Activated CD4-positive, alpha-beta T cell treated with anti-CD3 and anti-CD28 coated beads for 36 hours (primary cell): ENCODE measurements at regions of chr2 and their contacts with region 1.

Region 1: GRCh38 chr2:232611551-232612218 is 21.7 kb upstream of the EFHD1 start:
- DNase-seq: peak; percentile 84
- ATAC-seq: peak; percentile 80
- H3K4me3 Mint-ChIP-seq: no peak overlapping the region
- H3K27ac Mint-ChIP-seq: no peak overlapping the region
- H3K4me1 Mint-ChIP-seq: no peaks in the 10 kb centered on the region
- H3K27me3 Mint-ChIP-seq: no peaks in the 10 kb centered on the region

Region 2: DNA sequence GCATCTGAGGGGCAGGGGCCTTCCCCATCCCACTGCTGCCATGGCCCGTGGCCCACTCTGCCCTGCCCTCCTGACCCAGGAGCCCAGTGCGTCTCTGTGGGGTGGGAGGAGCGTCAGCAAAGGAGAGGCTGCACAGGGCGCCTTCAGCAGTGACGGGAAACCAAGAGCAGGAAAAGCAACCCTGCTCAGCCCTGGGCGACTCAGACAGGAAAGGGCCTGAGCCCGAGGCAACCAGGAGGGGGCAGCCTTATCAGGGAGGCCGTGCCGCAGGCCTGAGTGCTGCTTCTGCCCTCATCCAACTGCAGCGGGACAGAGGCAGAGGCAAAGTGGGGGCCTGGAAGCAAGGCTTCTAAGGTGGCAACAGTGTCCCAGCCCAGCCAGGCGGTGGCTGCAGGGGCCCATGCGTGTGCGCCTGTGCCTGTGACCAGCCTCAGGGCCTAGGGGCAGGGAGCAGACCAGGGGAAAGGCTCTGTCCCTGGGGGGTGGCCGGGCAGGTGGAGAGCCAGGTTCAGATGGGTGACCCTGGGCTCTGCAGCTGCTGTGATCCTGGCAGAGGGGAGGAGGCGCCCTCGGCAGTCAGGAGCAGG is 179.0 kb before region 1 on chr2:
- CTCF ChIA-PET with region 1: no interaction called
- POLR2A ChIA-PET with region 1: no interaction called
- intact Hi-C with region 1: no loop called
- DNase-seq: peak; percentile 26
- ATAC-seq: peak; percentile 77
- H3K4me3 Mint-ChIP-seq: no peak overlapping the region
- H3K27ac Mint-ChIP-seq: no peak overlapping the region
- H3K4me1 Mint-ChIP-seq: no peaks in the 10 kb centered on the region
- H3K27me3 Mint-ChIP-seq: no peaks in the 10 kb centered on the region

Region 3: DNA sequence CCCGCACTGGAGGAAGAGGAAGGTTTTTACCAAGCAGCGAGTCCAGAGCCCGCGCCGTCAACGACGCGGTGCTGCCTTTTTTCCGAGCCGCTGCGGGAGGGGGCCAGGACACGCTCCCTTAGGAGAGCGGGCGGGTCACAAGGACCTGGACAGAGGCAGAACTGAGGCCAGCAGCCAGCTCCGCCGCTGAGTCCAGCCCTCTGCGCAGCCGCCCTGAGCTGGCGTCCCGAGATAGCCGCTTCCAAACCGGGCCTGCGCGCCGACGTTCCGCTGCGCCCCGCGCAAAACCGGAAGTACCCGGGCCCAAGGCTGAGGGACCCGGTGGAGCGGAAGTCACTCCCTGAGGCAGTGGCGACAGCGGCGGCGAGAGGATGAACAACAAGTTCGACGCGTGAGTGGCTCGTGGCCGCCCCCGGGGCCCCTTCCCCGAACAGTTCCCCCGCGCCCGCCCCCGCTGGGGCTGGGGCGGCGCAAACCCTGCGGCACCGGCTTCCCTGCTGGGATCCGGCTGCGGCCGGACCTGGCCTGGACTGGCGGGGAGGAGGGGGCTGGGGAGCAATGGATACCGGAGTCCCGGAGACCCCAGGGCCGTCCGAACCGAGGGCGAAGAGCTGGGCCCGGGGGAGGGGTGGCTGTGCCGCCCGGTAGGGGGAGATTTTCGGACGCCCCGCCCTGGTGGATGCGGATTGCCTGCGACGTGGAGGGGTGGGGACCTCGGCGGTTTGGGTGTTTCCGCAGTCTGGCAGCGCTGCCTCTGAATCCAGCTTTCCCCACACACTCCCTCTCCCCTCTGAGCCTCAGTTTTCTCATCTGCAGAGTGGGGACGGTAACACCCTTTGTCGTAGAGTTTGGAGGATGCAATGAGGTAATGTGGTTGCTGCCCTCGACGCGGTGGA is 61.1 kb before region 1 on chr2 and contains the starts of genes EIF4E2 and TIGD1:
- CTCF ChIA-PET with region 1: no interaction called
- POLR2A ChIA-PET with region 1: no interaction called
- intact Hi-C with region 1: loop called in 1 of 2 experiments (anchors 1 kb)
- DNase-seq: peak; percentile 96
- ATAC-seq: peak; percentile 95
- H3K4me3 Mint-ChIP-seq: peak within 1 kb of the TSS; percentile 98
- H3K27ac Mint-ChIP-seq: peak within 1 kb of the TSS; percentile 100
- H3K4me1 Mint-ChIP-seq: peaks cover 66% of the 10 kb centered on the region
- H3K27me3 Mint-ChIP-seq: no peaks in the 10 kb centered on the region
- total RNA-seq, gene EIF4E2: 57.0 to 68.0 TPM
- total RNA-seq, gene TIGD1: 7.6 to 7.9 TPM

Region 4: DNA sequence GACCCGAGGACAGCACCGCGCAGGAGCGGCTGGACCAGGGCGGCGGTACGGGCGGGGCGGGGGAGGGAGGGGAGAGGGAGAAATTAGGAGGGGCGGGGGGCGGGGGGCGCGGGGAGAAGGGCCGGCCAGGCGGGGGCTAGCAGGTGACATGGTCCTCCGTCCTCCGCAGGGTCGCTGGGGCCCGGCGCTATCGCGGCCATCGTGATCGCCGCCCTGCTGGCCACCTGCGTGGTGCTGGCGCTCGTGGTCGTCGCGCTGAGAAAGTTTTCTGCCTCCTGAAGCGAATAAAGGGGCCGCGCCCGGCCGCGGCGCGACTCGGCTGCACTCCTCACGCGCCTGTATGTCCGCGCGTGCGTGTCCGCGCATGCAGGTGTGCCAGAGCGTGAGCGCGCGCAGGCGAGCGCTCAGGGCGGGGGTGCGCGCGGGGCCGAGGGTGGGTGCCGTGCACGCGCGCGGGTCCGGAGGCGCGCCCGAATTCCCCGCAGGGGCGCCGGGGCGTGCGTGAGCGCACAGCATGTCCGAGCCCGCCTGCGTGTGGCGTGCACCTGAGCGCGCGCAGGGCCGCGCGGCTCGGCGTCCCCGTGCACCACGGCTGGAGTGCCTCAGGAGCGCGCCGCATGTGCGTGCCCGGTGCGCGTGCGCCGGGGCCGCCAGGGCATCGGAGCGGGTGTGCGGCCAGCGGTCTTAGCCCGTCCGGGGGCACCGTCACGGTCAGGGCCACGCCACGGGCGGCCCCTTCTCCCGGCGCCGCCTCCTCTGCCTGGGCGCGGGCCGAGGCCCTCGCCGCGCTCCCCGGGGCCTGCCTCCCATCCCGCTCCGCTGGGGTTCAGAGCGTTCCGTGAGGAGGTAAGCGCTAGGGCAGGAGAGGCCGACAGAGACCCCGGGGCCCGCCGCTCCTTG is 264.6 kb after region 1 on chr2:
- CTCF ChIA-PET with region 1: no interaction called
- POLR2A ChIA-PET with region 1: no interaction called
- intact Hi-C with region 1: loop called in 1 of 2 experiments (anchors 5 kb)
- DNase-seq: peak; percentile 67
- ATAC-seq: peak; percentile 69
- H3K4me3 Mint-ChIP-seq: peak overlapping the region; percentile 50
- H3K27ac Mint-ChIP-seq: no peak overlapping the region
- H3K4me1 Mint-ChIP-seq: peaks cover 5% of the 10 kb centered on the region
- H3K27me3 Mint-ChIP-seq: peaks cover 7% of the 10 kb centered on the region

Region 5: DNA sequence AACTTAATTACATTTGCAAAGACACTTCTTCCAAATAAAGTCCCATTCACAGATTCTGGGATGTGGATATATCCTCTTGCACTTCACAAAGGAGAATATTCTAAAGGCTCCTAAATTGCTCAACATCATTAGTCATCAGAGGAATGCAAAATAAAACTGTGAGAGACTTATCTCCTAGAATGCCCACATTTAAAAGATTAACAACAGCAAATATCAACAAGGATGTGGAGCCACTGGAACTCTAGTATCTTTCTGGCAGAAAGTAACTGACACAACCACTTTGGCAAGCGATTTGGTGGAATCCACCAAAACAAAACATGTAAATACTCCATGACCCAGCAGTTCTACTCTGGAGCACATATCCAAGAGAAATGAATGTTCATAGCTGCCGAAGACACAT is 425.4 kb after region 1 on chr2:
- CTCF ChIA-PET with region 1: no interaction called
- POLR2A ChIA-PET with region 1: no interaction called
- intact Hi-C with region 1: no loop called
- DNase-seq: no peak
- ATAC-seq: no peak
- H3K4me3 Mint-ChIP-seq: no peak overlapping the region
- H3K27ac Mint-ChIP-seq: no peak overlapping the region
- H3K4me1 Mint-ChIP-seq: peaks cover 8% of the 10 kb centered on the region
- H3K27me3 Mint-ChIP-seq: no peaks in the 10 kb centered on the region

Region 6: DNA sequence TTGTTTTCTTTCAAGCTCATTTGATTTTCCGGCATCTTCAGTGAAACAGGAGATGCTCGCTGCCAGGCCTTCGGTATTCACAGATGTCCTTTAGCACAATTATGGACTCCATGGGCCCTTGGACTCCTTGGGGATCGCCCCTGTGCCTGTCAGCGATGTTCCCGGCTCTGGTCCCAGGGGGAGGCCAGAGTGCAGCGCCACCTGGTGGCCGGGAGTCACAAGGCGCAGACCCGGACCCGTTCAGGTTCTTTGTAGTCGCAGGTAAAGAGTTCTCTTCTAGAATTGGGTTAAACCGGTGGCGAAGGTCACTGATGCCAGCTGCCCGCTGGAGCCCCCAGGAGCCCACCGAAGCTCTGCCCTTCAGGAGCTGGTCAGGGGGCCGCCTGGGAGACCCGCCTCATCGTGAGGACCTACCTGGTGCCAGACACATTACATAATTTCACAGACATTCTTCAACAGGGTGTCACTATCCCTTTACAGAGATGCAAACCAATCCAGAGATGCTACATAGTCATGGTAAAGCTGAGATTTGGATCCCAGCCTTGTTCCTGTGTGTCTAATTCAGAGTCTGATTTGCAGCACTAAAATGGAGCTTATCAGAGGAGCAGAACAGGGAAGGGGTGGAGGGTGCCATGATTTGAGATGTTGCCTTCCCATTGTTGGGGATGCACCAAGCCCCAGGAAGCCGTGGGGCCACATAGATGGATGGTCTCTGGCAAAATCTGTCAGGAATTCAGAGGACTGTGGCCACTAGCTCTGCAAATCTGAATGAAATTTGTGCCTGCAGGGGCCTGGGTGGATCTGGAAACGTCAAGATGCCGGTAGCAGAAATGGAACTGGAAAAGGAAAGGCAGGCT is 442.5 kb after region 1 on chr2:
- CTCF ChIA-PET with region 1: interaction called, 6 read pairs
- POLR2A ChIA-PET with region 1: no interaction called
- intact Hi-C with region 1: loop called (anchors 1 to 10 kb)
- DNase-seq: peak; percentile 86
- ATAC-seq: peak; percentile 82
- H3K4me3 Mint-ChIP-seq: no peak overlapping the region
- H3K27ac Mint-ChIP-seq: no peak overlapping the region
- H3K4me1 Mint-ChIP-seq: peaks cover 4% of the 10 kb centered on the region
- H3K27me3 Mint-ChIP-seq: no peaks in the 10 kb centered on the region

Region 7: GRCh38 chr2:233443468-233444183 is 831.9 kb after region 1 on chr2:
- CTCF ChIA-PET with region 1: no interaction called
- POLR2A ChIA-PET with region 1: no interaction called
- intact Hi-C with region 1: loop called in 1 of 2 experiments (anchors 5 kb)
- DNase-seq: peak; percentile 91
- ATAC-seq: peak; percentile 93
- H3K4me3 Mint-ChIP-seq: no peak overlapping the region
- H3K27ac Mint-ChIP-seq: no peak overlapping the region
- H3K4me1 Mint-ChIP-seq: peaks cover 11% of the 10 kb centered on the region
- H3K27me3 Mint-ChIP-seq: no peaks in the 10 kb centered on the region

Region 8: GRCh38 chr2:233611284-233611683 is 999.6 kb after region 1 on chr2:
- CTCF ChIA-PET with region 1: no interaction called
- POLR2A ChIA-PET with region 1: no interaction called
- intact Hi-C with region 1: no loop called
- DNase-seq: no peak
- ATAC-seq: no peak
- H3K4me3 Mint-ChIP-seq: no peak overlapping the region
- H3K27ac Mint-ChIP-seq: no peak overlapping the region
- H3K4me1 Mint-ChIP-seq: no peaks in the 10 kb centered on the region
- H3K27me3 Mint-ChIP-seq: peaks cover 17% of the 10 kb centered on the region